Aorta (tissue), 5 donors: ENCODE measurements at regions of chr18 and their contacts with region 1.

Region 1: DNA sequence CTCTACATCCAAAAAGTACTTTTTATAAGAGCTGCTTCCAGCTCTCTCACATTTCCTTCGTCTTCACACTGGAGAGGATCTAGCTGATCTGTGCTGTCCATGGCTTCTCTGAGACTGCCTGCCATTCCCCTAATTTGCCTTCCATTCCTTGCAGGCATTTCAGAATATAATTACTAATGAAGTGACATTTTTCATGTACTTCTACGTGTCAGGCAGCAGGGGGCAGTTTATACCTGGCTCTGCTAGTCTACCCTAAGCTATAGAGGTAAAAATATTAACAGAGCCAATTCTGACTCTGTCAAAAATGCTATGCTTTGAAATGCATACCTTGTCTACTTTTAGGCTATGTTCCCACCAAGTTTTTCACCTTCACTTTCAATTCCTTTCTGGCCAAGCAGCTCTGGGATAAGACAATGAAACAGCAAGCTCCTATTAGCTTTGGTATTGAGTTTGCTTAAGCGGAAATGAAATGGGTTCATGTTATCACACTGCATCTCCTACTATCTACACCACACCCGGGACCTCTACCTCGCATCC is 81.9 kb downstream of the MEP1B start:
- DNase-seq: no peak
- ATAC-seq: peak; percentile 71
- H3K4me3 ChIP-seq: no peak overlapping the region
- H3K27ac ChIP-seq: no peak overlapping the region
- H3K4me1 ChIP-seq: peaks cover 0 to 5% of the 10 kb centered on the region in 2 donors
- H3K27me3 ChIP-seq: no peaks in the 10 kb centered on the region

Region 2: DNA sequence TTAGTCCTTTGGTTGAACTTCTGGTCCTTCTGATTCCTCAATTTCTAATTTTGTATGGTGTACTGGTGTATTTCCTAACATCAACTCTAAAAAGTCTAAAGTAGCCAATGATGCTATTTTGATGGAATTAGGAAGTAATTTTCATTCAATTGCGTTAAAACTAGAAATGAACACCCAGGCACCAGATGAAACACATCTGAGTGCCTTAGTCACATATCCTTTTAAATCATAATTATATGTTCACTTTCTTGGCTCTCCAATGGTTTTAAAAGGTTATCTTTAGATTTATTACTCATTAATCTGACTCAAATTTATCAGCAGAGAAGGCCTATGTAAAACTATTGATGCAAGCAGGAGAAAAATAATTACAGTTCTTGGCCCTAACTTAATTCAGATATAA is 79.3 kb after region 1 on chr18:
- intact Hi-C with region 1: no loop called
- DNase-seq: no peak
- ATAC-seq: peak; percentile 68
- H3K4me3 ChIP-seq: no peak overlapping the region
- H3K27ac ChIP-seq: no peak overlapping the region
- H3K4me1 ChIP-seq: peaks cover 2% of the 10 kb centered on the region in 2 donors
- H3K27me3 ChIP-seq: no peaks in the 10 kb centered on the region

Region 3: GRCh38 chr18:32552421-32553030 is 280.8 kb after region 1 on chr18:
- intact Hi-C with region 1: loop called (anchors 2 to 5 kb)
- DNase-seq: no peak
- ATAC-seq: peak; percentile 72
- H3K4me3 ChIP-seq: no peak overlapping the region
- H3K27ac ChIP-seq: no peak overlapping the region
- H3K4me1 ChIP-seq: no peaks in the 10 kb centered on the region
- H3K27me3 ChIP-seq: no peaks in the 10 kb centered on the region